Heart left ventricle (tissue), 16 donors: ENCODE measurements at regions of chr3 and their contacts with region 1.

Region 1: DNA sequence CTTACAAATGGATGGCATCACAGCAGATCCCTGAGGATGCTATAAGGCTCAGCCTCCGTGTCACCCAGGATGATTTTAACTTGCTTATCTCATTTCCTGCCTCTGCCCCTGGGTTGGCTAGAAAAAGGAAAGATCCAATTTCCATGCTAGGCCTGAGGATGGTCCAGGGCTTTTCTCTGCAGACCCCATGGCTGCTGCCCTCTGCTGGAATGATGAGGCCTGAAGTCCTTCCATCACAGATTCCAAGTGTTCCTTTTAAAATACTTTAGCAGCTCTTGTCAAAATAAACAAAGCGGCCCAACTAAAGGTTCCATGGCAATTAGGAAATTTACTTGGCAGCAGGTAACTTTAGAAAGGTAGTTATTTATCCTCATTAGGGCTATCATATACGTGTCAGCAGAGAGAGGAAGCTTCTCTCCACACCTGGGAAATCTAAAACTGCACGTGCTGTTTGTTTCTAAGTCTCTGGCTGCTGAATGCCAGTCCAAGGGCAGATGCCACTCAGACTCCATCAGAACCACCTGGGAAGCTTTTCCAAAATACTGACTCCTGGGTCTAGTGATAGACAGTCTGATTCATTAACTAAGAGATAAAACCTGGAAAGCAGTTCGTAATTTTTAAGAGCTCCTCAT is 401.9 kb upstream of the IL12A start:
- DNase-seq: peak in 1 of 5 donors; percentile 21
- ATAC-seq: peak in 1 of 4 donors; percentile 33
- H3K4me3 ChIP-seq: no peak overlapping the region
- H3K27ac ChIP-seq: no peak overlapping the region
- H3K4me1 ChIP-seq: no peaks in the 10 kb centered on the region
- H3K27me3 ChIP-seq: no peaks in the 10 kb centered on the region
- CTCF ChIP-seq: peak in 11 of 12 donors; percentile 7 to 55 (median 39)
- POLR2A ChIP-seq: no peak

Region 2: DNA sequence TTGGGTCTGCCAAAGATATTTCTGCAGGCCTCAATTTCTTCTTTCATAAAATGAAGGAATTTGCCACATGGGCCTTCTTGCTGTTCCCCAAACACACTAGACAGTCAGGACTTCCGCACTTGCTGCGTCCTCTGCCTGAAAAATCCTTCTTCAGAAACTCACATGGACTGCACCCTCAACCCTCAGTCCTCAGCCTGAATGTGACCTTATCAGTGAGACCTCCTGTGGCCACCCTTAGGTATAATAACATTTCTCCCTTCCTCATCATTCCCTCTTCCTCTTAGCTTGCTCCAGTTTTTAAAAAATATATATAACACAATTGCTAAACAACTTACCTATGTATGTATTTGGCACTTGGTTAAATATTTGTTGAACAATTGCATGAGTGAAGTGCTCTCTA is 527.3 kb before region 1 on chr3:
- intact Hi-C with region 1: no loop called
- DNase-seq: no peak
- ATAC-seq: no peak
- H3K4me3 ChIP-seq: no peak overlapping the region
- H3K27ac ChIP-seq: no peak overlapping the region
- H3K4me1 ChIP-seq: peaks cover 0 to 6% (median 0%) of the 10 kb centered on the region in 12 donors
- H3K27me3 ChIP-seq: no peaks in the 10 kb centered on the region
- CTCF ChIP-seq: no peak
- POLR2A ChIP-seq: no peak

Region 3: GRCh38 chr3:159280386-159281191 is 306.1 kb before region 1 on chr3:
- intact Hi-C with region 1: loop called in 1 of 10 experiments (anchors 10 kb)
- DNase-seq: no peak
- ATAC-seq: no peak
- H3K4me3 ChIP-seq: no peak overlapping the region
- H3K27ac ChIP-seq: no peak overlapping the region
- H3K4me1 ChIP-seq: peaks cover 0 to 2% (median 0%) of the 10 kb centered on the region in 12 donors
- H3K27me3 ChIP-seq: no peaks in the 10 kb centered on the region
- CTCF ChIP-seq: no peak
- POLR2A ChIP-seq: no peak

Region 4: GRCh38 chr3:159522262-159522661 is 64.4 kb before region 1 on chr3:
- intact Hi-C with region 1: no loop called
- DNase-seq: no peak
- ATAC-seq: no peak
- H3K4me3 ChIP-seq: no peak overlapping the region
- H3K27ac ChIP-seq: no peak overlapping the region
- H3K4me1 ChIP-seq: no peaks in the 10 kb centered on the region
- H3K27me3 ChIP-seq: no peaks in the 10 kb centered on the region
- CTCF ChIP-seq: no peak
- POLR2A ChIP-seq: no peak